H1 (cell line): ENCODE measurements at regions of chr5 and their contacts with region 1.

Region 1: DNA sequence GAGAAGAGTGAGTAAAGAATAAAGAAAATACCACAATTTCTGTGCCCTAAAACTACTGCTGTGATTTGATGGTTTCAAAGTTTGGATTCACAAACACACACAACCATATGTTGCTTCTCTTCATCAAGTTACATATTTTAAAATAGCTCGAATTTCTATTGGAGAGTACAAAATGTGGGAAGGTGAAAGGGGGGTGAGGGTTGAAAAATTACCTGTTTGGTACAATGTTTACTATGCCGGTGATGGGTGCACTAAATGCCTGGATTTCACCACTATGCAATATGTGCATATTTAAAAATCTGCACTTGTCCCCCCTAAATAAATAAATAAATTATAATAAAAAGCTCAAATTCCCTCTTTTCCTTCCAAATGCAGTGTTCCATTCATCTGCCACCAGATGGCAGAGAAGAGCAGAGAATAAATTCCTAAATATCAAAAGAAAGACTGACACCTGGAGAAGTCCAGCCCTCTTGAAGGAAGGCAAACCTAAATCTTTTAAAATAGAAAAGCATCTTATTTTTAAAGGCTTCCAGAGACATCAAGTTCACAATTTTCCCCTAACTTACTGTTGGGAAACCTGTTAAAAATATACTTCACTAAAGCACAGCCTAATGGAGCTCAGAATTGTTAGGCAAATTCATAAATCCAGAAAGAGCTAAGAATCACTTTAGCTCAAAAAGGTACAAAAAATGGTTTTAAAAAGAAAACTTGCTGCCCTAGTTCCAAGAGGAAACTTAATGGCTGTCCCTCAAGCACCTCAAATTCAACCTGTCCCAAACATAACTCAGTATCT is 24.8 kb upstream of the HNRNPA0 start:
- DNase-seq: no peak
- H3K4me3 ChIP-seq: no peak overlapping the region
- H3K27ac ChIP-seq: no peak overlapping the region
- H3K4me1 ChIP-seq: no peaks in the 10 kb centered on the region
- H3K27me3 ChIP-seq: peaks cover 0 to 1% (median 0%) of the 10 kb centered on the region in 4 experiments; a peak in 1 of 7 replicates
- CTCF ChIP-seq: peak in 2 of 3 experiments; percentile 38 to 52; a peak in 2 of 4 replicates
- EP300 ChIP-seq: no peak
- POLR2A ChIP-seq: no peak
- RAD21 ChIP-seq: peak; percentile 69 to 71

Region 2: DNA sequence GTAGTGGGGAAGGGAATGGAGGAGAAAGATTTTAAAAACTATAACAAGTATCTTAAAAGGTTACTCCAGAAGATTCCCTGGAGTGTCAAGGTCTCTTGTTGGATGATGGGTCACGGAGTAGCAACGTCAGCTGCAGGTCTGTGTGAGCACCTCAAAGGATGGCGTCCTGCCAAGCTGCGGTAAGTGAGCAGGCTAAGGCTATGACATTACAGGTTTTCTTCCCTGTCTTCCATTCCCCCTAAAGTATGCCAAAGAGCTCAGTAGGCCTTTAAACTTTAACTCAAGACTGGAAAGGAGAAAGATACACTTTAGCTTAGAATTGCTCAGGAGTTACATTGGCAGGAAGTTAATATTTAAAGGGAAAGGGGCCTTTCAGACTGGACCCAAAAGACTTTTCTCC is 297.4 kb before region 1 on chr5:
- CTCF ChIA-PET with region 1: no interaction called
- POLR2A ChIA-PET with region 1: no interaction called
- DNase-seq: no peak
- H3K4me3 ChIP-seq: no peak overlapping the region
- H3K27ac ChIP-seq: no peak overlapping the region
- H3K4me1 ChIP-seq: no peaks in the 10 kb centered on the region
- H3K27me3 ChIP-seq: no peaks in the 10 kb centered on the region
- CTCF ChIP-seq: no peak
- EP300 ChIP-seq: no peak
- POLR2A ChIP-seq: no peak
- RAD21 ChIP-seq: no peak

Region 3: GRCh38 chr5:137792303-137792702 is 13.3 kb after region 1 on chr5:
- CTCF ChIA-PET with region 1: interaction called, 19 read pairs
- POLR2A ChIA-PET with region 1: interaction called, 3 read pairs
- DNase-seq: no peak
- H3K4me3 ChIP-seq: no peak overlapping the region
- H3K27ac ChIP-seq: no peak overlapping the region
- H3K4me1 ChIP-seq: no peaks in the 10 kb centered on the region
- H3K27me3 ChIP-seq: peaks cover 0 to 1% (median 0%) of the 10 kb centered on the region in 4 experiments; a peak in 1 of 7 replicates
- CTCF ChIP-seq: no peak
- EP300 ChIP-seq: no peak
- POLR2A ChIP-seq: no peak
- RAD21 ChIP-seq: no peak

Region 4: DNA sequence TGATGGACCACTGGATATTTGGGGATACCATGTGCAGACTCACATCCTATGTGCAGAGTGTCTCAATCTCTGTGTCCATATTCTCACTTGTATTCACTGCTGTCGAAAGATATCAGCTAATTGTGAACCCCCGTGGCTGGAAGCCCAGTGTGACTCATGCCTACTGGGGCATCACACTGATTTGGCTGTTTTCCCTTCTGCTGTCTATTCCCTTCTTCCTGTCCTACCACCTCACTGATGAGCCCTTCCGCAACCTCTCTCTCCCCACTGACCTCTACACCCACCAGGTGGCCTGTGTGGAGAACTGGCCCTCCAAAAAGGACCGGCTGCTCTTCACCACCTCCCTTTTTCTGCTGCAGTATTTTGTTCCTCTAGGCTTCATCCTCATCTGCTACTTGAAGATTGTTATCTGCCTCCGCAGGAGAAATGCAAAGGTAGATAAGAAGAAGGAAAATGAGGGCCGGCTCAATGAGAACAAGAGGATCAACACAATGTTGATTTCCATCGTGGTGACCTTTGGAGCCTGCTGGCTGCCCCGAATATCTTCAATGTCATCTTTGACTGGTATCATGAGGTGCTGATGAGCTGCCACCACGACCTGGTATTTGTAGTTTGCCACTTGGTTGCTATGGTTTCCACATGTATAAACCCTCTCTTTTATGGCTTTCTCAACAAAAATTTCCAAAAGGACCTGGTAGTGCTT is 29.7 kb after region 1 on chr5:
- CTCF ChIA-PET with region 1: interaction called, 25 read pairs
- POLR2A ChIA-PET with region 1: no interaction called
- DNase-seq: no peak
- H3K4me3 ChIP-seq: no peak overlapping the region
- H3K27ac ChIP-seq: no peak overlapping the region
- H3K4me1 ChIP-seq: no peaks in the 10 kb centered on the region
- H3K27me3 ChIP-seq: no peaks in the 10 kb centered on the region
- CTCF ChIP-seq: no peak
- EP300 ChIP-seq: no peak
- POLR2A ChIP-seq: no peak
- RAD21 ChIP-seq: no peak

Region 5: GRCh38 chr5:137822158-137822764 is 43.3 kb after region 1 on chr5:
- CTCF ChIA-PET with region 1: interaction called, 61 read pairs
- POLR2A ChIA-PET with region 1: interaction called, 3 read pairs
- DNase-seq: peak; percentile 39 to 60
- H3K4me3 ChIP-seq: no peak overlapping the region
- H3K27ac ChIP-seq: no peak overlapping the region
- H3K4me1 ChIP-seq: peaks cover 0 to 4% (median 1%) of the 10 kb centered on the region in 4 experiments; a peak in 2 of 7 replicates
- H3K27me3 ChIP-seq: peaks cover 0 to 1% (median 0%) of the 10 kb centered on the region in 4 experiments; a peak in 1 of 7 replicates
- CTCF ChIP-seq: peak; percentile 7 to 80 (median 76)
- EP300 ChIP-seq: no peak
- POLR2A ChIP-seq: no peak
- RAD21 ChIP-seq: peak; percentile 88 to 90

Region 6: GRCh38 chr5:137888857-137889759 is 110.1 kb after region 1 on chr5 and contains the start of gene PKD2L2:
- CTCF ChIA-PET with region 1: interaction called, 17 read pairs
- POLR2A ChIA-PET with region 1: no interaction called
- DNase-seq: peak; percentile 1 to 87
- H3K4me3 ChIP-seq: no peak within 1 kb of the TSS
- H3K27ac ChIP-seq: no peak within 1 kb of the TSS
- H3K4me1 ChIP-seq: no peaks in the 10 kb centered on the region
- H3K27me3 ChIP-seq: no peaks in the 10 kb centered on the region
- CTCF ChIP-seq: peak in 2 of 3 experiments; percentile 13 to 15; a peak in 1 of 4 replicates
- EP300 ChIP-seq: no peak
- POLR2A ChIP-seq: no peak
- RAD21 ChIP-seq: peak in 1 of 2 experiments; percentile 25; a peak in 1 of 4 replicates
- total RNA-seq, gene PKD2L2: not detected in 2 replicates